Heart right ventricle (tissue), 16 donors: ENCODE measurements at regions of chr2 and their contacts with region 1.

Region 1: DNA sequence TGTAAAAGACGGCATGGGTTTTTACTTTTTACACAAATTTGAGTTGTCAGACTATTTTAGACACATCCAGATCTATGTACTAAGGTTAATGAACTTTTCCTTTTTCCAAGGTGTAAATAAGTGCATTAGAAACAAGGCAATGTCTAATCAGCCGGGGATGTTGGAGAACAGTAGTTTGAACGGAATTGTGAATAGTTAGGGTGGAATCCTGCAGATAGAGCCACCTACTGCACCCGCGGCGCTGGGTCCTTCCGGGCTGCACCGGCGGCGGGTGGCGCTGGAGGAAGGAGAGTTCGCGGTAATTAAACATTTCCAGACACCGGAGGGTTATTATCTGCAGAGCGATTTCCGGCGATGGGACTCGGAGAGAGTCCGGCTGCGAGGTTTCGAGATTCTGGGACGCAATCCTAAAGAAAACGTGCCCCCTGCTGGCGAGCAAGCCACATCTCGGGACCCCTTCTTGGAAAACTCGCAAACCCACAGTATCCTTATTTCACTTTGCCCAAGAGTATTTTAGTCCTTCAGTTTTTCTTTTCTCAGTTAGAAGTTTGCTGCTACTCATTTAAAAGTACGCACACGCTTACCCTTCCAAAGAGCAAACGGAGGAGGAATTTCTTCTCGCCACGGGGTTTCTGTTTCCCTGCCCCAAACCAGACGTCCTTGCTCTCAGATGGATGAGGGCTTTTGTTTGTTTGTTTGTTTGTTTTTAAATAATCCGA is 4.5 kb upstream of the OSR1 start:
- DNase-seq: peak; percentile 73 to 83
- ATAC-seq: peak; percentile 28 to 78 (median 57)
- H3K4me3 ChIP-seq: peak overlapping the region; percentile 52 to 77 (median 65)
- H3K27ac ChIP-seq: peak overlapping the region in 7 of 10 donors; percentile 11 to 65 (median 46)
- H3K4me1 ChIP-seq: peaks cover 0 to 34% (median 26%) of the 10 kb centered on the region in 9 donors
- H3K27me3 ChIP-seq: peaks cover 0 to 75% (median 19%) of the 10 kb centered on the region in 7 donors
- CTCF ChIP-seq: peak; percentile 65 to 90 (median 79)

Region 2: GRCh38 chr2:18435421-18436037 is 927.4 kb before region 1 on chr2:
- intact Hi-C with region 1: loop called in 6 of 10 experiments (anchors 5 to 10 kb)
- DNase-seq: peak in 1 of 2 donors; percentile 35
- ATAC-seq: peak in 3 of 8 donors; percentile 27 to 57 (median 49)
- H3K4me3 ChIP-seq: no peak overlapping the region
- H3K27ac ChIP-seq: no peak overlapping the region
- H3K4me1 ChIP-seq: peaks cover 0 to 13% (median 4%) of the 10 kb centered on the region in 9 donors
- H3K27me3 ChIP-seq: no peaks in the 10 kb centered on the region
- CTCF ChIP-seq: peak; percentile 21 to 65 (median 59)

Region 3: GRCh38 chr2:18749912-18750526 is 612.9 kb before region 1 on chr2:
- intact Hi-C with region 1: loop called (anchors 2 to 10 kb)
- DNase-seq: peak in 1 of 2 donors; percentile 67
- ATAC-seq: peak in 2 of 8 donors; percentile 37 to 38
- H3K4me3 ChIP-seq: no peak overlapping the region
- H3K27ac ChIP-seq: no peak overlapping the region
- H3K4me1 ChIP-seq: peaks cover 0 to 15% (median 0%) of the 10 kb centered on the region in 9 donors
- H3K27me3 ChIP-seq: no peaks in the 10 kb centered on the region
- CTCF ChIP-seq: peak; percentile 55 to 87 (median 80)

Region 4: GRCh38 chr2:18987592-18988073 is 375.3 kb before region 1 on chr2:
- intact Hi-C with region 1: loop called in 5 of 10 experiments (anchors 5 to 10 kb)
- DNase-seq: peak; percentile 29 to 81
- ATAC-seq: peak in 5 of 8 donors; percentile 58 to 68 (median 66)
- H3K4me3 ChIP-seq: no peak overlapping the region
- H3K27ac ChIP-seq: no peak overlapping the region
- H3K4me1 ChIP-seq: peaks cover 0 to 31% (median 17%) of the 10 kb centered on the region in 9 donors
- H3K27me3 ChIP-seq: no peaks in the 10 kb centered on the region
- CTCF ChIP-seq: peak in 8 of 9 donors; percentile 7 to 59 (median 34)

Region 5: DNA sequence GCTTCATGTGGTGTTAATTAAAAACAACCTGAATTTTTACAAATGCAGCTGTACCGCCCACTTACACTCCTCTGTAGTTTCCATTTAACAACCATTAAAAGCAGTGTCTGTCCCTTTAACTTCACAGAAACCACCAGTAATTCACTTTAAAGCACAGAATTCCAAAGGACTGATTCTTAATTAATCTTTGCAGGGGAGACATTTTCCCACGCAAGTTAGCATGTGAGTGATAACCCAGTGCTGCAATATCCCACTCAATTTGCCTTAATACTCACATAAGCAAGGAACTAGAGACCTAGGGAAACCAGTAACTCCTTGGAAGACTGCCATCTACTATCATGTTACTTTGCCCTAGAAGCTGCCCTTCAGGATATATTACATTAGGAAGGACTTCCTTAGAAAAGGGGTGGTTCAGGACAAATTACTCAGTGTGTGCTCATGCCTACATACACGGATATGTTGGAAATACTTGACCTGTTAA is 106.8 kb before region 1 on chr2:
- intact Hi-C with region 1: no loop called
- DNase-seq: no peak
- ATAC-seq: no peak
- H3K4me3 ChIP-seq: no peak overlapping the region
- H3K27ac ChIP-seq: no peak overlapping the region
- H3K4me1 ChIP-seq: peaks cover 0 to 5% (median 0%) of the 10 kb centered on the region in 9 donors
- H3K27me3 ChIP-seq: no peaks in the 10 kb centered on the region
- CTCF ChIP-seq: no peak

Region 6: GRCh38 chr2:19682493-19682892 is 319.6 kb after region 1 on chr2:
- intact Hi-C with region 1: loop called in 2 of 10 experiments (anchors 10 kb)
- DNase-seq: no peak
- ATAC-seq: no peak
- H3K4me3 ChIP-seq: no peak overlapping the region
- H3K27ac ChIP-seq: no peak overlapping the region
- H3K4me1 ChIP-seq: peaks cover 0 to 5% (median 2%) of the 10 kb centered on the region in 9 donors
- H3K27me3 ChIP-seq: no peaks in the 10 kb centered on the region
- CTCF ChIP-seq: no peak